AG04450 (cell line): ENCODE measurements at regions of chr3 and their contacts with region 1.

Region 1: DNA sequence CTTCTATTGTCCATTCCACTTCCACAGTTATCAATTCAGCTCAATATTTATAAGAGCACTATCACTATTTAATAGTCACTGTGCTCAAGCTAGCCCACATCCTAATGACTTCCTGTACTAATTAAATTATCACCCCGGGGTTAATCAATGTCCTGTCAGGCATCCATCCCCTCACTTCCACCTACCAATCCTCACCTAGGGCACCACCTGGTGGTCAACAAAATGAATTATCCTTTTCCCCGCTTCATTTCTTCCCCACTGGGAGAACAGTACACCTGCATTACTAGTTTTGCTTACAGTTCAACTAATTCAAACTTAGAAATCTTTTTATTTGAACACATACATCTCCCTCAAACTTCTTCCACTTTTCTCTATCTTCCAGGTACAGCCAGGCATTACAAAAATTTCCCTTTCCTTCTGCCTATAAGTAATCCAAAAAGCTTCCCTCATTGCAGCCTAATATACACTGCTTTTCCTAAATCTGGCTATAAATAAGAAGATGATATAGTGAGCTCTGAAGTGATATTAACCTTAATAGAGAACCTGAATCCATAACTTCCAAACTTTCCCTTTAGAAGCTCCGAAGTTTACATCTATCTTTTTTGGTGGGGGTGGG is 68.5 kb downstream of the TMCC1 start:
- DNase-seq: peak; percentile 7
- H3K4me3 ChIP-seq: no peak overlapping the region
- H3K27ac ChIP-seq: no peak overlapping the region
- H3K27me3 ChIP-seq: no peaks in the 10 kb centered on the region
- CTCF ChIP-seq: peak; percentile 71

Region 2: GRCh38 chr3:129233538-129233937 is 591.5 kb before region 1 on chr3:
- CTCF ChIA-PET with region 1: no interaction called
- POLR2A ChIA-PET with region 1: no interaction called
- DNase-seq: no peak
- H3K4me3 ChIP-seq: no peak overlapping the region
- H3K27ac ChIP-seq: no peak overlapping the region
- H3K27me3 ChIP-seq: no peaks in the 10 kb centered on the region
- CTCF ChIP-seq: no peak

Region 3: DNA sequence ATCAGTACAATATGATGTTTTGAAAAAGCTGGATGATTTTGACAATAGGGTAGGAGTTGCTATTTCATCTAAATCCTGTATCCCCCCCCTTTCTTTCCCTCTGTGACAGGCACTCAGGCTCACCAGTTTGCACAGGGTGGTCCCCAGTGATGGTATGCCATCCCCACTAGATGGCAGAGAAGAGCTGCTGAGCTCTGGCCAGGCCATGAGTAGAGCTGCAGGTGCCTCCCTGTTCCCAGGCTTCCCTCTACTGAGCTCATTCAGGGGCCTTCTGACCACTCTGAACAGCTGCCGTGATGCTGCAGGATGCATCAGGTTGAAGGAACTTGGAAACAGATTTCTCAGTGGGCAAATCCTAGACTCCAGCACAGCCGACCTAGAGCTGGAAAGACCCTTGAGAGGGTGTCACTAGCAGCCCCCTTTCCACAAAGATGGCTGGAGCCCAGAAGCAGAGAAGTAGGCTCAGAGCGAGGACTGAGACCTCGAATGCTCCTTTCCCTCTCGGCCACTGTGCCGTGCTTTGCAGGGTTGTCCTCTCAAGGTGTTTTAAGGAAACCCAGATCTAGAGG is 441.7 kb before region 1 on chr3:
- CTCF ChIA-PET with region 1: interaction called, 31 read pairs
- POLR2A ChIA-PET with region 1: no interaction called
- DNase-seq: peak; percentile 49
- H3K4me3 ChIP-seq: no peak overlapping the region
- H3K27ac ChIP-seq: no peak overlapping the region
- H3K27me3 ChIP-seq: no peaks in the 10 kb centered on the region
- CTCF ChIP-seq: peak; percentile 91

Region 4: DNA sequence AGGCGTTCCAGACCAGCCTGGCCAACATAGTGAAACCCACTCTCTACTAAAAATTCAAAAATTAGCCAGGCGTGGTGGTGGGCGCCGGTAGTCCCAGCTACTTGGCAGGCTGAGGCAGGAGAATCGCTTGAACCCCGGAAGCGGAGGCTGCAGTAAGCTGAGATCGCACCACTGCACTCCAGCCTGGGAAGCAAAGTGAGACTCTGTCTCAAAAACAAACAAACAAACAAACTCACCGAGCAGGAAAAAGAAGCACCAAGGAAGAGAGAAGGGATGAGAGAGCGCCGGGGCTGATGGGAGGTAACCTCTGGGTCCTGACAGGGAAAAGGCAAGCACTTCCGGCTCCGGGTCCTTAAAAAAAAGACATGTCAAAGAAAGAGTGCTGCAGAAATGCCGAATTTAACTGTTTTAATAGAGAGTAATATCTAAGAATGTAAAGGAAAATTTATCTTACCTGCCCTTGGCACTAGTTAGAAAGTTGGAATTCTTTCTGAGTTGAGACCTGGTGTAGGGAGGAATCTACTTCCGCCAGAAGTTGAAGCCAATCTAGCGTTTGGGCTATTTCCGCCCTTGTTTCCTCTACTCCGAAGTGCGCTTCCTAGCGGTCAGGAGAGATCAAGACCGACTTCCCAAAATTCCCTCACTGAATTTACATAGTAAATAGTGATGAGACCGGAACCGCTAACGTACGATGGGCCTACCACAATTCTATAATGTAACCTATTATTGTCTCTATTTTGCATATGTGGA is 425.7 kb before region 1 on chr3:
- CTCF ChIA-PET with region 1: interaction called, 11 read pairs
- POLR2A ChIA-PET with region 1: no interaction called
- DNase-seq: peak; percentile 90
- H3K4me3 ChIP-seq: peak overlapping the region; percentile 87
- H3K27ac ChIP-seq: peak overlapping the region; percentile 68
- H3K27me3 ChIP-seq: no peaks in the 10 kb centered on the region
- CTCF ChIP-seq: peak; percentile 81

Region 5: GRCh38 chr3:129627429-129628168 is 197.4 kb before region 1 on chr3:
- CTCF ChIA-PET with region 1: interaction called, 13 read pairs
- POLR2A ChIA-PET with region 1: no interaction called
- DNase-seq: no peak
- H3K4me3 ChIP-seq: peak overlapping the region; percentile 50
- H3K27ac ChIP-seq: peak overlapping the region; percentile 80
- H3K27me3 ChIP-seq: no peaks in the 10 kb centered on the region
- CTCF ChIP-seq: peak; percentile 81

Region 6: GRCh38 chr3:129650256-129650872 is 174.7 kb before region 1 on chr3:
- CTCF ChIA-PET with region 1: interaction called, 38 read pairs
- POLR2A ChIA-PET with region 1: no interaction called
- DNase-seq: no peak
- H3K4me3 ChIP-seq: no peak overlapping the region
- H3K27ac ChIP-seq: no peak overlapping the region
- H3K27me3 ChIP-seq: no peaks in the 10 kb centered on the region
- CTCF ChIP-seq: peak; percentile 79

Region 7: DNA sequence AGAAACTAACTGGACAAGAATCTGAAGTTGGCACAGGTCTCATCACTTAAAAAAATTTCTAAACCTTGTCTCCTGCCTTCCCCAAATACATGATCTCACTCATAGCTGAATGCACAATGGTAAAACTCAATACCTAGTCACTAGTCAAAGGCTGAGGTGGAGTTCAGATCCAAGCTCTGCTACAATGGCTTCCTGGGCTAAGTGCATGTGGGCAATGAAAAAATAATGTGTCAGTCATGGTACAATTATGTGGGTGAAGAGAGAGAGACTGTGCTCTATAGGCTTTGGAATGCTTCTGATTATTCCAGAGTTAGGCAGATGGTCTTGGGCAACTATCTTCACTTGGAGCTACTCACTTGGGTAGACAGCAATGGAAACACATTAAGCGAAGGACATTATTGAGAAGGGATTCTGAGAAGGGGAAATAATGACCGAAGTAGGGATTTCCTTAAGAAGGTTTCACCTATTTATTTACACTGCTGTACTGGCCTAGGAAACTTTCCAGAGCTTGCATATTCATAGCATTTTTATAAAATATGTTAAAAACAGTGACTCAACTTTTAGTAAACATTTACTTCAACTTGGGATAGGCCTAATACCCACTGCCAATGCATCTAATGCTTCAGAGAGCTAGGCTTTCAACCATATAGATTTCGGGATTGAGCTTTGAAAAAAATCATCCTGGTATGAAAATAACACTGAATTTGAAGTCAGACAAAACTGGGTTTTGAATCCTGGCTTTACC is 159.8 kb before region 1 on chr3:
- CTCF ChIA-PET with region 1: interaction called, 10 read pairs
- POLR2A ChIA-PET with region 1: no interaction called
- DNase-seq: no peak
- H3K4me3 ChIP-seq: no peak overlapping the region
- H3K27ac ChIP-seq: peak overlapping the region; percentile 11
- H3K27me3 ChIP-seq: no peaks in the 10 kb centered on the region
- CTCF ChIP-seq: no peak